Endothelial cell of umbilical vein (primary cell): ENCODE measurements at regions of chr12 and their contacts with region 1.

Region 1: DNA sequence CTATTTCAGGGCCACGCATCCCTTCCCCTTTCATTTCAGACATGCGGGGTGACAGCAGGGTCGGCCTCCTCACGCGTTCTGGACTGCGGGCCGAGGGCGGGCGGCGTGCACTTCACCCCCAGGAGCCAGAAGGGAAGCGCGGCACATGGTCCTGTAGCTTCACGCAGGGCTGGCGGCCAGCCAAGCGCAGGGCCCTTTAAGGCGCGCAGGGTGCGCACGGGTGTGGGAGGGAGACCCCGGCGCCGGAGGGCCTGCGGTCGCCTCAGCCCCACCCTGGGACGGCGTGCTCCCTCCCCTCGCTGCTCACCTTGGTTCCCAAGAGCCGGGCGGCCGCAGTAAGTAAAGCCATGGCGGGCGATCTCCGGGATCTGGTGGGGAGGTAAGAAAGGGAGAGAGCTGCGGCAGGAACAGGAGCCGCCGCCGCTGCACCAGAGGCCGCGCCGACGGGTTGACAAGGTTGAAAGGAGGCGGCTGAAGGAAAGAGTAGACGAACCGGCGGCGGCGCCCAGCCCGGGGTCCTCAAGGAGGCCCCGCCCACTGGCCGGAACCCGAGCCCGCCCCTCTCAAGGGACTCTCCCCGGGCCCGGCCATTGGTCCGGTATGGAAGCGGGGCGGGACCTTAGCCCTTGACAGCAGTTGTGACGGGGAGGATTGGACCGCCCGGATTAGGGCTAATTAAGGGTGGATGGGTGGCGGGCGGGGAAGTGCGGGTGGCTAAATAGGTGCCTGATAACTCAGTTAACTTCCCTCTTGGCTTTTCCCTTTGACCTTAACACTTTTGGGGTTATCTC is at the start of gene CS:
- DNase-seq: peak; percentile 96
- H3K4me3 ChIP-seq: peak within 1 kb of the TSS; percentile 2 to 91 (median 88)
- H3K27ac ChIP-seq: peak within 1 kb of the TSS; percentile 77
- H3K4me1 ChIP-seq: peaks cover 26% of the 10 kb centered on the region
- H3K27me3 ChIP-seq: no peaks in the 10 kb centered on the region
- CTCF ChIP-seq: no peak
- POLR2A ChIP-seq: peak; percentile 1
- total RNA-seq, gene CS: 296 and 312 TPM in 2 replicates

Region 2: GRCh38 chr12:56084958-56085543 is 215.0 kb before region 1 on chr12:
- CTCF ChIA-PET with region 1: no interaction called
- POLR2A ChIA-PET with region 1: no interaction called
- dilution Hi-C with region 1: no loop called
- intact Hi-C with region 1: no loop called
- DNase-seq: peak; percentile 20
- H3K4me3 ChIP-seq: no peak overlapping the region
- H3K27ac ChIP-seq: no peak overlapping the region
- H3K4me1 ChIP-seq: peaks cover 16% of the 10 kb centered on the region
- H3K27me3 ChIP-seq: peaks cover 4 to 8% of the 10 kb centered on the region in 2 experiments
- CTCF ChIP-seq: peak; percentile 40 to 58
- POLR2A ChIP-seq: no peak

Region 3: DNA sequence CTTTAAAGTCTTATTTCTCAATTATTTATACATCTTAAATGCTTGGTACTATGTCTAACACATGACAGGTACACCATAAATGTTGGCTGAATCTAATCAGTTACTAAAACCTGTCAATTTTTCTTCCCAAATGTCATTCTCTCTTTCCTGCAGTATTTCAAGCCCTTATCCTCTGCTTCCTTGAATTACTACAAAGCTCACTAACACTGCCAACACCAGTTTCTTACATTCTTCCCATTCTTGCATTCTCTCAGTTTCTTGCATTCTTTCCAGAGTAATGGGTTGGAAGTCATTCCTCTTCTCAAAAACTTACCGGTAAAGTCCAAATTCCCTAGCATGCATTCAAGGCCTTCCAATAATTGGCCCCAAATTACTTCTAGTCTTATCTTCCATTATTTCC is 101.2 kb before region 1 on chr12:
- CTCF ChIA-PET with region 1: no interaction called
- POLR2A ChIA-PET with region 1: interaction called, 3 read pairs
- dilution Hi-C with region 1: no loop called
- intact Hi-C with region 1: loop called (anchors 1 kb)
- DNase-seq: peak; percentile 69
- H3K4me3 ChIP-seq: no peak overlapping the region
- H3K27ac ChIP-seq: peak overlapping the region; percentile 97
- H3K4me1 ChIP-seq: peaks cover 32% of the 10 kb centered on the region
- H3K27me3 ChIP-seq: no peaks in the 10 kb centered on the region
- CTCF ChIP-seq: no peak
- POLR2A ChIP-seq: no peak

Region 4: DNA sequence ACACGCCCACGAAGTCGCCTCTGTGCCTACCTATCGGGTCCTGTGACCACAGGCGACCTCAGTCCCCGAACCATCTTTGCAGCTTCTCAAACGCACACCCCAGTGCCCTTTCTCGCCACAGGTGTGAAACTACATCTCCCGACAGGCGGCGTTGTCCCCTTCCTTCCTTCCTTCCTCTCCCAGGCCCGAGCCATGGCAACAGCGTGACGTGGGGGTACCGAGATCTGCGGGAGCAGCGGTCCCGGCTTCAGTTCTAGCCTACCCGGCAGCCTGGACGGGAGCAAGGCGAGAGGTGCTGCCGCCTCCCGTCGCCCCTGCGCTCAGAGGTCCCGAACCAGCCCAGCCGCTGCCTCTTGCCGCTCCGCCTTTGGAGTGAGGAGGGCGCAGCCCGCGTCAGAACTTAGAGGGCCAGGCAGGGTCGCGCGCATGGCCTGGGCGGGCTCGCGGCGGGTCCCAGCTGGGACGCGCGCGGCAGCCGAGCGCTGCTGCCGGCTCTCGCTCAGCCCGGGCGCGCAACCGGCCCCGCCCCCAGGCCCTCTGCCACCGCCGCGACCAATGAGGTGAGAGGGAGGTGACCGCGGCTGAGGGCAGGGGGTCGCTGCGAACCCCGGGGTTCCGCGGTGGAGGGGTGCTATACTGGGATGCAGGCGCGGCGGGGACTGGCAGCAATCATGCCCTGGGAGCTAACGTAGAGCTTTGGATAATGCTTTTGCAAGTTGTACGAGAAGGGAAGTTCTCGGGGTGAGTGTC is 33.2 kb before region 1 on chr12 and contains the start of gene COQ10A:
- CTCF ChIA-PET with region 1: no interaction called
- POLR2A ChIA-PET with region 1: no interaction called
- dilution Hi-C with region 1: no loop called
- intact Hi-C with region 1: loop called (anchors 1 kb)
- DNase-seq: peak; percentile 86
- H3K4me3 ChIP-seq: peak within 1 kb of the TSS; percentile 25 to 50 (median 43)
- H3K27ac ChIP-seq: peak within 1 kb of the TSS; percentile 61
- H3K4me1 ChIP-seq: peaks cover 4% of the 10 kb centered on the region
- H3K27me3 ChIP-seq: no peaks in the 10 kb centered on the region
- CTCF ChIP-seq: peak; percentile 24 to 60
- POLR2A ChIP-seq: peak; percentile 90
- total RNA-seq, gene COQ10A: 14.7 and 15.3 TPM in 2 replicates

Region 5: DNA sequence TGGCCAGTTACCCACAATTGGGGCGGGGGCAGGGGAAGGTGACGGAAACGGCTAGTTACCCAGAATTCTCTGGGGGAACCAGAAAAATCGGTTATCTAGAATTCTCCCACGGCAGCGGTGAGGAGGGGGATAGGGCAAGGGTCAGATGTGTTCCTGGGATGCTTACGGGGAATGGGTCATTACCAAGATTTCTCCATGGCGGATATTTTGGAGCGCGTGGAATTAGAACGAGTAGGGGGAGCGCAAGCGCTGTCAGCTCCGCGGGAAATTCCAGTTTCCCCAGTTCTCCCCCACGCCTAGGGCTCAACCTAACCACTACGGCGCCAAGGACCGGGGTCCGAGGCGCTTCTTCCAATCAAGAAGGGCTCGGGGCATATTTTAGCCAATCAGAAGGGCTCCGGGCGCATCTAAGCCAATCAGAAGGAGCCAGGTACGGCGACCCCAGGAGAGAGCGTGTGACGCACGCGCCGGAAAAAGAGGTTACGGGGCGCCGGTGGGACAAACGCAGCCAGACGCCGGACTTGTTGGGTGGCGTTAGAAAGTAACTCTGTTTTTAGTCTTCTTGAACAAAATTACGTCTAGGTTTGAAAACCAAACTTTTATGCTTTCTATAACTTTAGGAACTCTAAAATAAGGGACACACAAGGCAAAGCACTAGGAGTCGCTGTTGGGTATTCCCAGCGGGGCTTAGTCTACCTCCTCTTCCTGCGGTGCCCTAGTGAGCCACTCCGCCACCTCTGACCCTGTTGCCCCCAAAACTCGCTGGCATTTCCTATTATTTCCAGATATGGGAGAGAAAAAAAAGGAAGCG is 33.8 kb after region 1 on chr12 and contains the start of gene PAN2:
- CTCF ChIA-PET with region 1: no interaction called
- POLR2A ChIA-PET with region 1: no interaction called
- dilution Hi-C with region 1: no loop called
- intact Hi-C with region 1: loop called (anchors 1 kb)
- DNase-seq: peak; percentile 97
- H3K4me3 ChIP-seq: peak within 1 kb of the TSS; percentile 45 to 70 (median 49)
- H3K27ac ChIP-seq: peak within 1 kb of the TSS; percentile 97
- H3K4me1 ChIP-seq: peaks cover 16% of the 10 kb centered on the region
- H3K27me3 ChIP-seq: no peaks in the 10 kb centered on the region
- CTCF ChIP-seq: peak; percentile 65 to 66
- POLR2A ChIP-seq: peak; percentile 76
- total RNA-seq, gene PAN2: 21.5 and 24.4 TPM in 2 replicates

Region 6: DNA sequence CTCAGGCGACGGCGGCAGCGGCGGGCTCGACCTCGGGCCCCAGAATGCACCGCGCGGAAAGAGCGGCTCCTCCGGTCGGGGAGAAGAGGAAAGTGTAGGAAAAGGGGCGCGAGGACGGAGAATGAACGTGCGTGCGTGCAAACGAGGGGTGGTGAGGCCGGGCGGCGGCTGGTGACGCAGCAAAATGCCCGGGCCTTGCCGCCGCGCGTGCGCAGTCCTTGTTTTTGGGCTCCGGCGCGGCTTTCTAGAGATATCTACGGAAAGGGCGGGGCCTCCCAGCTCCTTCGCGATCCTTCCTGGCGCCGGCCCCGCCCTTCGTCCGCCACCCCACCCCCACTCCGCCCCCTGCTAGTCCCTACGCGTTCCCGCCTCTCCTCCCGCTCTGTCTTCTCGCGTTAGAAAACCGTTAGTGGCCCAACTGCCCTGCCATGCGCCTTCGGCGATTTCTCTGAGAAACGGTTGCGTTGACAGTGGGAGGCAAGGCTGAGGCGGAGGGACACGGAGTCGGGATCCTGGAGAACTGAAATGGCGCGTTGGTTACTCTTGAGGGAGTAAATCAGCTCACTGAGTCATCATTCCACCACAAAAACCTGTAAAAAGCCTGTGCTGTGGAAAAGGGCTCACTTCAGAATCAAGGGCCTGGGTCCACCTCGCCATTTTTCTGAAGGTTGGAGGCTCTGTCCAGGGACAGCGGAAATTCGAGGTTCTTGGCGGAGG is 388.2 kb after region 1 on chr12 and contains the start of gene PTGES3:
- CTCF ChIA-PET with region 1: no interaction called
- POLR2A ChIA-PET with region 1: no interaction called
- dilution Hi-C with region 1: no loop called
- intact Hi-C with region 1: no loop called
- DNase-seq: peak; percentile 99
- H3K4me3 ChIP-seq: peak within 1 kb of the TSS; percentile 61 to 91 (median 84)
- H3K27ac ChIP-seq: peak within 1 kb of the TSS; percentile 90
- H3K4me1 ChIP-seq: peaks cover 27% of the 10 kb centered on the region
- H3K27me3 ChIP-seq: no peaks in the 10 kb centered on the region
- CTCF ChIP-seq: peak in 1 of 2 donors; percentile 3
- POLR2A ChIP-seq: peak; percentile 88
- total RNA-seq, gene PTGES3: 262 and 278 TPM in 2 replicates